Posterior vena cava (tissue), 2 donors: ENCODE measurements at regions of chr17 and their contacts with region 1.

Region 1: GRCh38 chr17:27245230-27245696 is 48.7 kb upstream of the WSB1 start:
- DNase-seq: peak; percentile 96

Region 2: DNA sequence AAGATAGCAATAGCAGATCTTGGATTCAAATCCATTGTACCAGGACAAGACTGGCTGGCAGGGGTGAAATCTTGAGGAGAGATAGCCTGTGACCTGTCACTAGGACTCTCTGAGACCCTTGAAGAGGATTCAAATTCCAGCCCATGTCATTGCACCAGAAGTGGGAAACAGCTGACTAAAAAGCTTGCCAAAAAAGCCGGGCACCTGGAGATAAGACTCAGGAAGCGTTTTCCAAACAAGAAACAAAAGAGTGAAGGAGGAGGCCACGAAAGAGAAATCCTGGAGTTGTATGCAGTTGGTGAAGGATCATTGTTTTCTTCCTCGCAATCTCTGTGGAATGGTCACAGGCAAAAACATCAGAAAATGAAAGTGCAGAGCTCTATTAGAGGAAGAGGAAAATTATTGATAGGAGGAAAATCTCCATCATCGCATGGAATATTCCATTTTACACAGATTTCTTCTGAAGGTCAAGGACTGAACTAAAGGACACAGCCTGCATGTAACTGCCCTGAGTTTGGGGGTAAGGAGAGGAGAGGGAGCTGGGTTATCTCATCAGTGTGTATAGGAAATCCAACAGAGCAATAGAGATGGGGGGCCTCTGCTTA is 39.6 kb after region 1 on chr17:
- intact Hi-C with region 1: loop called in 1 of 2 experiments (anchors 5 kb)
- DNase-seq: no peak

Region 3: DNA sequence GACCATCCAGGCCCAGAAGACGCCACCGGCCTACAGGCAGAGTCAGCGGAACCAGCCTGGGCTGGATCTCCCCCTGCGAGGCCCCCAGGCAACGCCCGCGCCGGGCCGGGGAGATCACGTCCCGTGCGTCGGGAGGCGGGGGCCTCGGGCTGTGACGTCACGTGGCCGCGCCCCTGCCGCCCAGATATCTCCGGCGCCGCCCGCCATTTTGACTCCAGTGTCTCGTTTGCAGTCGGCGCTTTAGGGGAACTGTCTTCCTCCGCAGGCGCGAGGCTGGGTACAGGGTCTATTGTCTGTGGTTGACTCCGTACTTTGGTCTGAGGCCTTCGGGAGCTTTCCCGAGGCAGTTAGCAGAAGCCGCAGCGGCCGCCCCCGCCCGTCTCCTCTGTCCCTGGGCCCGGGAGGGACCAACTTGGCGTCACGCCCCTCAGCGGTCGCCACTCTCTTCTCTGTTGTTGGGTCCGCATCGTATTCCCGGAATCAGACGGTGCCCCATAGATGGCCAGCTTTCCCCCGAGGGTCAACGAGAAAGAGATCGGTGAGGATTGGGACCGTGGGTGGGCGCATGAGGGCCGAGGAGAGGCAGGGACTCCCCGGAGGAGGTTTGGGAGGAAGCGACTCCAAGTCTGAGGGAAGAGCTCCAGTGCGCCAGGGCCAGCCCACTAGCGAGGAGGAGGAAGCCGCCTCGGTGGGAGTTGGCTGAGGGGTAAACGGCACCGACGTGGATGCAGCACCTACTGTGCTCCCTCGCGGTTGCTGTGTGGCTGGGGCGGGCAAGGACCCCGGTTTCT is 48.8 kb after region 1 on chr17 and contains the start of gene WSB1:
- intact Hi-C with region 1: loop called (anchors 2 to 5 kb)
- DNase-seq: peak; percentile 99
- total RNA-seq, gene WSB1: 206 to 227 TPM

Region 4: DNA sequence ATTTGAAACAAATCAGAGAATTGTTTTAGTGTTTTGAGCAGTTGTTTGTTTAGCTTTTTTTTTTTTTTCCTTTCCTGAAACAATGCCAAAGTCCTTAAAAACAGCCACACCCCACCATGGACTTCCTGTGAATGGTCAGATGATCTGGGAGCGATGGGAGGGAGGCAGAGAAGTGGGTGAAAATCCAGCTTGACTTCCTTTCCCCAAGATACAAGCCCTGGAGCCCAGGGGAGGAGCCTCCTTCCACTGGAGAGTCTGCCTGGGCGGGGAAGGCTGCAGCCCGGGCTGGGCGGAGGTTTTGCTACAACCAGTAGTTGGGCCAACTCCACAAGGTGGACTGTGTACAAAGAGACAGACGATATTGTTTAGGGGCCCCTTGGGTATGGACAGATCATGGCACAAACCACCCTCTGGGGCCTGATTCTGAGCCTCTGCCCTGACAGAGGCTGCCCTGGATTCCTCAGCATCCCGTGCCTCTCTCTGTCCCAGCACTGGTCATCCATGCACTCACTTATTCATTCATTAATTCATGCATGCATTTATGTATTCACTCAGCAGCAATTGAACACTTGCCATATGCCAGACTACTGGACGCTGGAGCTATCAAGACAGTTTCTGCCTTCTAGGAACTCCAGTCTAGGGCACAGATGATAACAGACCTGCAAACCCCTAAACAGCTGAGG is 78.4 kb after region 1 on chr17:
- intact Hi-C with region 1: loop called in 1 of 2 experiments (anchors 2 kb)
- DNase-seq: peak; percentile 88

Region 5: GRCh38 chr17:27332485-27333409 is 87.5 kb after region 1 on chr17:
- intact Hi-C with region 1: loop called in 1 of 2 experiments (anchors 2 kb)
- DNase-seq: peak; percentile 100